ENCODE measurements at regions of chr4 and their contacts with region 1.

Region 1: GRCh38 chr4:83639849-83640493 is 104.1 kb downstream of the GPAT3 start:
- DNase-seq: peak in 1 of 2 donors; percentile 50
- ATAC-seq: peak; percentile 89

Region 2: DNA sequence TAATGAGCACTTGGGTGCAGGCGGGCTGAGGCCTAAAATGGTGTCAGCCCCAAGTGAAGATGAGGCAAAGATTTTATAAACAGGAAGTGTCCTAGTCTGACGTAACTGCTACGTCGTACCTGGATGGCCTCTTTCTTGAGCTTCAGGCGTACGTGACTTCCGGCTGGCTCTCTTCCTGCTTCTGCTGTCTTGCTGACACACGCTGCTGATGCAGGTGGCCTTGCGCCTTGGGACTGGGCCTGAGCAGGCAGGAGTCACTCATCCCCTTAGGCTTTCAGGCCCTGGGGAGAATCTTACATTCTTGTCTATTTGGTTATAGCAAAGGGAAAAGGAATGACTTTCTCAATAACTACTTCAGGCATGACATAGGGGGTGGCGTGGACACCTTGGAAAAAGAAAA is 135.0 kb before region 1 on chr4:
- intact Hi-C with region 1: loop called in 1 of 2 experiments (anchors 5 kb)
- DNase-seq: no peak
- ATAC-seq: no peak

Region 3: GRCh38 chr4:83866571-83867227 is 226.7 kb after region 1 on chr4:
- intact Hi-C with region 1: no loop called
- DNase-seq: no peak
- ATAC-seq: no peak

Region 4: DNA sequence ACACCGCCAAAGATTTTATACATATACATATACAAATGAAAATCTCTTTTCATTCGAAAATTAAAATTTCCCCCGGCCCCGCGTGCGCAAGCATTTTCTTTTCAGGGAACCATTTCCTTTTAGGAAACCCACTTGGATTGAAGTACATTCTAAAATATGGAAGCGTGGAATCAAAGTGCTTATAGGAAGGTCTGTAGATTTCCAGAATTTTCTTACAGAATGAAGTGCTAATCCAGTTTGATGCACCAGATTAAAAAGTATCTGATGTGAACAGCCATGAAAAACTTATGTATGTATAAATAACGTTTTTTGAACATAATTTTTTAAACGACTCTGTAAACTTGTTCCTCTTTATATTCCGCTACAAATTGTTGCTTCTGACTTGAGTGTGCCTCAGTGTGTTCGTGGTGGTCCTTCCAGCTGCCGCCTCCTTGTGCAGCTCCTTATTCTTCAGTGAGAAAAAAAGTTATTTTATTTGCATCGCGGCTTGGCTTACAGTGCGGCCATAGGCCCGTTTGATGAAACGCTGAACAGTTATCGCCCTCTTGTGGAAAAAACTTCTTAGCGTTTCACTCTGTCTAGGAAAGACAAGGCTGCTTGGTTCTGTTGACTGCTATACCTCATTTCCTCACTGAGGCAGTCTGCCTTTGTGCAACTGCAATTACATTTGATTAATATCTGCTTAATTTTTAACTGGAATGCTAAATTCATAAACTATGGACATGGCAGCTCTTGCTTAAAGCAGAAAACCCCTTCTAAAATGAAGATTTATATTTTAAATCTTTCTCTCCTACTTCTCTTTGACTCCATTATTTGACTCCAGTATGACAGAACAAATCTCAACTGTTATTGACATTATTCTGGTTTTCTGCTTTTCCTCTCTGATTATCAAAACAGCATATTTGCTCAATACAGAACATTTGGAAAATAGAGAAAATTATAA is 863.8 kb after region 1 on chr4:
- intact Hi-C with region 1: loop called in 1 of 2 experiments (anchors 10 kb)
- DNase-seq: no peak
- ATAC-seq: peak; percentile 80

Region 5: GRCh38 chr4:84529169-84529751 is 889.3 kb after region 1 on chr4:
- intact Hi-C with region 1: loop called in 1 of 2 experiments (anchors 5 kb)
- DNase-seq: no peak
- ATAC-seq: no peak

Measured in left colon (tissue), 2 donors.